ENCODE measurements at regions of chr2 and their contacts with region 1.

Region 1: GRCh38 chr2:201440182-201440581 is 11.1 kb downstream of the TRAK2 start:
- DNase-seq: peak; percentile 49
- H3K4me3 Mint-ChIP-seq: peak overlapping the region; percentile 38
- H3K27ac Mint-ChIP-seq: peak overlapping the region; percentile 70
- H3K4me1 Mint-ChIP-seq: peaks cover 11% of the 10 kb centered on the region
- H3K27me3 Mint-ChIP-seq: no peaks in the 10 kb centered on the region
- CTCF ChIP-seq: no peak

Region 2: GRCh38 chr2:200428951-200429665 is 1011.1 kb before region 1 on chr2:
- CTCF ChIA-PET with region 1: no interaction called
- intact Hi-C with region 1: no loop called
- DNase-seq: no peak
- H3K4me3 Mint-ChIP-seq: no peak overlapping the region
- H3K27ac Mint-ChIP-seq: no peak overlapping the region
- H3K4me1 Mint-ChIP-seq: peaks cover 13% of the 10 kb centered on the region
- H3K27me3 Mint-ChIP-seq: no peaks in the 10 kb centered on the region
- CTCF ChIP-seq: no peak

Region 3: GRCh38 chr2:201451292-201452057 is 11.3 kb after region 1 on chr2 and contains the starts of genes STRADB and TRAK2:
- CTCF ChIA-PET with region 1: interaction called, 13 read pairs
- intact Hi-C with region 1: no loop called
- DNase-seq: peak; percentile 93
- H3K4me3 Mint-ChIP-seq: peak within 1 kb of the TSS; percentile 100
- H3K27ac Mint-ChIP-seq: peak within 1 kb of the TSS; percentile 70
- H3K4me1 Mint-ChIP-seq: peaks cover 29% of the 10 kb centered on the region
- H3K27me3 Mint-ChIP-seq: no peaks in the 10 kb centered on the region
- CTCF ChIP-seq: peak; percentile 25
- total RNA-seq, gene STRADB: 19.0 and 19.8 TPM in 2 replicates
- total RNA-seq, gene TRAK2: 24.4 TPM in 2 replicates